ENCODE measurements at regions of chr2 and their contacts with region 1.

Region 1: DNA sequence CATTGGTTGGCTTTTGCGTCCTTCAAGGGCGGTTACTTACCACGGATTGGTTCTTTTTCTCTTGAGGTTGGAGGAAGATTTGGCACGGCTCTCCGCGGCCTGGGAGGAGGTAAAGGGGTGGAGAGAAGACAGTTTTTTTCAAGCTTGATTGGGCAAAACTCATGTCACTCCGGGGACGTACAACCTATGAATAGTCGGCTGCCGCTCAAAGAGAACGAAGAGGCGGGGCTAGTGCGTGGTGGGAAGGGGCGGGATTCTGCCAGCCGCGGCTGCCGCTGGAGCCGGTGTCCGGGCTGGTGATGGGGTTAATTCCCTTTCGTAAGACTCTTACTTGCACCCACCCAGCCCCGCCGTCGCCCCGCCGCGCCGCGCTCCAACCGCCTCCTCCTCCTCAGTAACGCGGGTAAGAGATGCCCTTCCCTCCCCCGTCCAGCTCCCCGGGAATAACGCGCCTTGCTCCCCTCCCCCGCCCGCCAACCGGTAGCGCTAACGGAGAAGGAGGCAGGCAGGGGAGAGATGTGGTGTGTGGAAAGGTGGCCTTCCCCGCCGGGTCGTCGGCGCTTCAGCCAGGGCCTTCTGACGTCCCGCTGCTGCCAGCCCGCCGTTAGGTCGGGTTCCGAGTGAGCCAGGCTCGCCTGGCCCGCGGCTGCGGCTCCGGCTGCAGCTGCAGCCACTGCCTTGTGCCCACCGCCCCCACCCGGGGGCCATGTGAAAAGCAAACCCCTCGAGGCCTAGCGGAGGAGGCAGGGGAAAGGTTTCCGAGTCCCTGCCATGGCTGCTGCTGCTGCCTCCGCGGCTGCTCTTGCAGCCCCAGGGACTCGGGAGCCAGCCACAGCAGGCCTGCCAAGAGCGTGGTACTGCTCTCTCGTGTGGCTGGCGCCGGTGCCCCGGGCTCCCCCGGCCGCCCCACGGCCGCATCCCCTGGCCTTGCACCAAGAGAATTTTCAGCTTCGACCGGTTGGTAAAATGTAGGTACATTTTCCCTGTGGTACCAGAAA is at the start of gene R3HDM1:
- DNase-seq: peak; percentile 100
- H3K4me3 ChIP-seq: peak within 1 kb of the TSS; percentile 92
- H3K27ac ChIP-seq: peak within 1 kb of the TSS; percentile 90
- H3K4me1 ChIP-seq: peaks cover 6% of the 10 kb centered on the region
- H3K27me3 ChIP-seq: no peaks in the 10 kb centered on the region
- CTCF ChIP-seq: peak; percentile 41
- total RNA-seq, gene R3HDM1: 65.4 and 66.6 TPM in 2 replicates

Region 2: GRCh38 chr2:135052042-135052876 is 479.3 kb before region 1 on chr2 and contains the start of gene RAB3GAP1:
- CTCF ChIA-PET with region 1: no interaction called
- POLR2A ChIA-PET with region 1: no interaction called
- intact Hi-C with region 1: loop called (anchors 5 kb)
- DNase-seq: peak; percentile 91
- H3K4me3 ChIP-seq: peak within 1 kb of the TSS; percentile 82
- H3K27ac ChIP-seq: peak within 1 kb of the TSS; percentile 94
- H3K4me1 ChIP-seq: peaks cover 28% of the 10 kb centered on the region
- H3K27me3 ChIP-seq: no peaks in the 10 kb centered on the region
- CTCF ChIP-seq: no peak
- total RNA-seq, gene RAB3GAP1: 38.9 and 39.8 TPM in 2 replicates

Region 3: GRCh38 chr2:135175177-135175576 is 356.4 kb before region 1 on chr2:
- CTCF ChIA-PET with region 1: no interaction called
- POLR2A ChIA-PET with region 1: interaction called, 14 read pairs
- intact Hi-C with region 1: no loop called
- DNase-seq: no peak
- H3K4me3 ChIP-seq: no peak overlapping the region
- H3K27ac ChIP-seq: no peak overlapping the region
- H3K4me1 ChIP-seq: no peaks in the 10 kb centered on the region
- H3K27me3 ChIP-seq: no peaks in the 10 kb centered on the region
- CTCF ChIP-seq: no peak

Region 4: GRCh38 chr2:135728064-135728743 is 196.7 kb after region 1 on chr2:
- CTCF ChIA-PET with region 1: no interaction called
- POLR2A ChIA-PET with region 1: no interaction called
- intact Hi-C with region 1: no loop called
- DNase-seq: no peak
- H3K4me3 ChIP-seq: no peak overlapping the region
- H3K27ac ChIP-seq: no peak overlapping the region
- H3K4me1 ChIP-seq: no peaks in the 10 kb centered on the region
- H3K27me3 ChIP-seq: no peaks in the 10 kb centered on the region
- CTCF ChIP-seq: no peak

Measured in A673 (cell line).